ENCODE measurements at regions of chr7 and their contacts with region 1.

Region 1: DNA sequence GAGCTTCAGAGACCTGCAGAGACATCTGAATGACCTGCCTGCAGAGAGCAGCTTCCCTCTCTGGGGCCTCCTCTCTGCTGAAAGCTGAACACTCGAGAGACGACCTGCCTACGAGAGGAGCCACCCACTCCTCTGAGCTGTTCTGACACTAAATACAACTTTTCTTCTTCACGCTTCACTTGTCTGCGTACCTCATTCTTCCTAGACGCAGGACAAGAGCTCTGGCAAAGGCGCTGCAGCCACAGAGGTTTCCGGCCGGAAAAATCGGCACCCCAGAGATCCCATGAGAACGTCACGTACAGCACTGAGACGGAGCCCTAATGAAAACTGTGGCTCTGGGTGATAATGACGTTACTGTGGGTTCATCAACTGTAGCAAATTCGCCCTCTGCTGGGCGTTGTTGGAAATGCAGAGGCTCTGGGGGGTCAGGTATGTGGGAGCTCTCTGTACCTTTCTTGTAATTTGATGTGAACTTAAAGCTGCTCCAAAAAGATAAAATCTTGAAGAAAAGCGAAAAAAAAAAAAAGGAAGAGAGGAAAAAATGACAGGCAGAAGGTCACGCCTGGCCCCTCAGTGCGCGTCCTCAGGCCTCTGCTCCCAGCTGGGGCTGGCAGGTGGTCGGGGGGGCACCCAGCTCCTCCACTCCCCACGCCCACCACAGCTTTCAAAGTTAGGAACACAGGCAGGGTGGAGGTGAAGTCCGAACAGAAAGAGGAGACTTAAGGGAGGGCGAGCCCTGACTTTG is 120.7 kb downstream of the DYNC2I1 start:
- DNase-seq: peak; percentile 95
- H3K4me3 Mint-ChIP-seq: peak overlapping the region; percentile 77
- H3K27ac Mint-ChIP-seq: peak overlapping the region; percentile 69
- H3K4me1 Mint-ChIP-seq: peaks cover 22% of the 10 kb centered on the region
- H3K27me3 Mint-ChIP-seq: no peaks in the 10 kb centered on the region

Region 2: GRCh38 chr7:158394936-158395335 is 582.1 kb before region 1 on chr7:
- CTCF ChIA-PET with region 1: interaction called, 3 read pairs
- intact Hi-C with region 1: loop called (anchors 2 kb)
- DNase-seq: peak; percentile 50
- H3K4me3 Mint-ChIP-seq: no peak overlapping the region
- H3K27ac Mint-ChIP-seq: no peak overlapping the region
- H3K4me1 Mint-ChIP-seq: no peaks in the 10 kb centered on the region
- H3K27me3 Mint-ChIP-seq: no peaks in the 10 kb centered on the region

Region 3: DNA sequence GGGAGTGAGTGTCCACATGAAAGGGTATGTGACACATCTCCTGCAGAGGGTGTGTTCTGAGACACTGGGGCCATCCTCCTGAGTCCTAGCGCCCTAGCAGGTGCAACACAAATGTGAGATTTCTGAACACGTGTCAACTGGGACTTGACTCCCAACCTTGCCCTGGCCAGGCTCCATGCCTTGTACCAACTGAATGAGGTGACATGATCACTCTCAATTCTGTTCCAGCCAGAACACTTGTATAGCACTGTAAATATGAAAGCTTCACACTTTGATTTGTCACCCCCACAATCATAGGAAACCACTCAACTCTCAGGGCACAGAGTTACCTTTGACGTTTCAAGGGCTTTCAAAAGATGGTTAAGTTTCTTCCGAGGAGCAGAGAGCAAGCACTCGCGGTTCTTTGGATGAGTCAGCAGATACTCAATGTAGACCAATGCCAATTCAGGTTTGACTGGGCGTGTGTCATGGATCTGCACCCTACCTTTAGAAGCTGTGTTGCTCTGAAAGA is 321.0 kb before region 1 on chr7:
- CTCF ChIA-PET with region 1: interaction called, 6 read pairs
- intact Hi-C with region 1: loop called (anchors 1 kb)
- DNase-seq: peak; percentile 90
- H3K4me3 Mint-ChIP-seq: no peak overlapping the region
- H3K27ac Mint-ChIP-seq: peak overlapping the region; percentile 84
- H3K4me1 Mint-ChIP-seq: peaks cover 21% of the 10 kb centered on the region
- H3K27me3 Mint-ChIP-seq: no peaks in the 10 kb centered on the region

Region 4: DNA sequence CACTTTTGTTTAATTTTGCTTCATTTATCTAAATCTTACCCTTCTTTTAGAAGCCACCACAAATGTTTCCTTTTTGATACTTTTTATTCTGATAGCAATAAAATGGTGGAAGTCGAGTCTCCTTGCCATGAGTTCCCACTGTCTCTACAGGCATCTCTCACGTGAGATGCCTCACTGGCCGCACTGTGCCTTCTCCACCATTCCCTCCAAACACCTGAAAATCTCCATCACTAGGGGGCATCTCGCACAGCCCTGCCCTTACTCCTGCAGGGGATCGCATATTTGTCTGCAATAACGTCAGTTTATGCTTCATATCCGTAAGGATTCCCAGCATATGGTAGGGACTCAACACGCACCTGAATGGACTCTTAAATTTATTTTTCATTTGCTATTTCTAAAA is 216.1 kb before region 1 on chr7:
- CTCF ChIA-PET with region 1: no interaction called
- intact Hi-C with region 1: loop called (anchors 5 kb)
- DNase-seq: peak; percentile 23
- H3K4me3 Mint-ChIP-seq: no peak overlapping the region
- H3K27ac Mint-ChIP-seq: no peak overlapping the region
- H3K4me1 Mint-ChIP-seq: no peaks in the 10 kb centered on the region
- H3K27me3 Mint-ChIP-seq: no peaks in the 10 kb centered on the region

Region 5: DNA sequence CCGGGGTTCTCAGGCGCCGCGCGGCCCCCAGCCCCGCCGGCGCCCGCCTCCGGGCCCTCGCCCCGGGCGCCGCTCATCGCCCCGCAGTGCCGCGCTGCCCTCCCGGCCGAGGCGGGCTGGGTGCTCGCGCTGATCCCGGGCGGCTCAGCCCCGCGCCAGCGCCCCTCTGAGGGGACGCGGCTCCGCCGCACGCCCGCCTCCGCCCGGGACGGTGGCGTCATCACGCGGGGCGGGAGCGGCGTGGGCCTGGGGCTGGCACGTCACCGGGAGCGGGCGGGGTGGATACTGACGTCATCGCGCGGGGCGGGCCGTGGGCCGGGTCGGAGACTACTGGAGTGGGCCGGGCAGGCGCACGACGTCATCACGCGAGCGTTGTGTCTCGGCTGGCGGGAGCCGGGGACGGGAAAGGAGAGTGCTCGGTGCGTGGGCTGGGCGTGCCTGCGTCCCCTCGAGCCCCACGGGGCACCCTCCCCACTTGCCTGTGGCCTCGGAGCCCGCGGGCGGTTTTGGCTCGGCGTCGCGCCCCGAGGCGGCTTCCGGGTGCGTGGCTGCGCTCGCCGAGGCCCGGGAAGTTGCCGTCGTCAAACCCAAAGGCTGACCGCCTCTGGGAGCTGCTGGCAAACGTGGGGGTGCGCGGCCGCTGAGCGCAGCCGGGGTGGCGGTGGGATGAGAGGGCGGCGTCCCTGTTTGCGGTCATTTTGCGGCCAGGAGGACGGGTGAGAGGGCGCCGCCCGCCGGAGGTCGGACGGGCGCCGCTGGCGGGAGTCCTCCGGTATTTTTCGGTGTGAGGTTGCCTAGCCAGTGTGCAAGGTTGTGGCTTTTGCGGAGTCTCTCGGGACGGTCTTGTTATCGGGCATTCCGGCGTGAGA is 147.4 kb before region 1 on chr7 and contains the start of gene ESYT2:
- CTCF ChIA-PET with region 1: interaction called, 4 read pairs
- intact Hi-C with region 1: loop called (anchors 1 kb)
- DNase-seq: peak; percentile 98
- H3K4me3 Mint-ChIP-seq: peak within 1 kb of the TSS; percentile 98
- H3K27ac Mint-ChIP-seq: peak within 1 kb of the TSS; percentile 94
- H3K4me1 Mint-ChIP-seq: peaks cover 27% of the 10 kb centered on the region
- H3K27me3 Mint-ChIP-seq: no peaks in the 10 kb centered on the region
- total RNA-seq, gene ESYT2: 41.7 to 44.3 TPM

Region 6: GRCh38 chr7:158966780-158967390 is 10.1 kb before region 1 on chr7:
- CTCF ChIA-PET with region 1: interaction called, 10 read pairs
- intact Hi-C with region 1: no loop called
- DNase-seq: no peak
- H3K4me3 Mint-ChIP-seq: no peak overlapping the region
- H3K27ac Mint-ChIP-seq: no peak overlapping the region
- H3K4me1 Mint-ChIP-seq: no peaks in the 10 kb centered on the region
- H3K27me3 Mint-ChIP-seq: peaks cover 2% of the 10 kb centered on the region

Region 7: DNA sequence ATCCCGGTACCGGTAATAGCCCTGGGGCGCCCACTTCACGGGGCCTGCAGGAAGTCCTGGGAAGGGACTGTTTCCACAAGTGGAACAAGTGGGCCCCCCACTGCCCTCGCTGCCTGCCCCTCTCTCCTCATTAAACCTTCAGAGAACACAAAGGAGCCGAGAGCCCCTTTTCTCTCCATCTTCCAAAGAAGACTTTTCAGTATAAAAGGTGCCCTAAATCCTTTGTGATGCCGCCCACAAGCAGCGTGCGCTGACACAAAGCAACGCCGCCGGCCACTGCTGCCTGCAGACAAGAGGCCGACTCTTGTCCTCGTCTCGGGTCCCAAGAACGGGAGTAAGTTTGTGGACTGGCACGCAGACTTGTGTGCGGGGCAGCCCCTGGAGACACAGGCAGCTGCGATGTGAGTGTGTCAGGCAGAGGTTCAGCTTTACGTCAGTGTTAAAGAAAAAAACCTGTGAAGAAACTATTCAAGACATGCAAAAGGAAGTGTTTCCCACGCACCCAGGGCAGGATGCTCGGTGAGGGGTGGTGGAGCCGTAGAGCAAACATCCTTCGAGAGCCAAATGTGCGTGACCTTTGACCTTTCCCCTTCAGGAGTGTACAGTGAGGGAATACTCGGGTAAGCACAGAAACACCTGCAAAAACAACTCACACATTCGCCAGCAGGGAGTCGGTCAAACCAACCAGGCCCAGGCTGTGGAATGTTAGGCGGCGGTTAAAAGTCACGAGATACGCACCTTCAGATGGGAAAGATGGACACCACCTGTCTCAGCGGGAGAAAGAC is 49.4 kb after region 1 on chr7:
- CTCF ChIA-PET with region 1: no interaction called
- intact Hi-C with region 1: no loop called
- DNase-seq: peak; percentile 77
- H3K4me3 Mint-ChIP-seq: no peak overlapping the region
- H3K27ac Mint-ChIP-seq: peak overlapping the region; percentile 41
- H3K4me1 Mint-ChIP-seq: peaks cover 15% of the 10 kb centered on the region
- H3K27me3 Mint-ChIP-seq: peaks cover 18% of the 10 kb centered on the region